ENCODE measurements at regions of chr15 and their contacts with region 1.

Region 1: DNA sequence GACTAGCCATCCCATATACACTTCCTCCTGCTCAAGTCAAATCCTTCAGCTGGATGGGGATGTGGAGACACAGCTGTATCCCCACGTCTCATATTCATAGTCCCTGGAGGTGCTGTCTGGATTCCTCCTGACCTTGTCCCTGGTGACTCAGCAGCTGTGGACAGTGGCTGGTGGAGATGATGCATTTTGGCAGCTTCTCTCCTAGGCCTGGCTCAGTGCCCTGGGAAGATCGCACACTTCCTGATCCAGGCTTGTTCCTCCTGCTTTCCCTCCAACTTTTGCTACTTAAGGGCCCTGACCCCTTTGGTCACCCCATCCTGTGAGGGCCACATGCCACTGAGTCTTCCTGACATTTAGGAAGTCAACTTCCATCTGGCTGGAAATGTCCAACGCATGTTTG is 44.4 kb downstream of the ADAMTSL3 start:
- DNase-seq: peak; percentile 78 to 83 (median 83)
- ATAC-seq: peak; percentile 55 to 84 (median 74)
- H3K4me3 ChIP-seq: no peak overlapping the region
- H3K27ac ChIP-seq: peak overlapping the region in 5 of 12 donors; percentile 22 to 56 (median 35)
- H3K4me1 ChIP-seq: peaks cover 0 to 46% (median 4%) of the 10 kb centered on the region in 12 donors
- H3K27me3 ChIP-seq: no peaks in the 10 kb centered on the region
- CTCF ChIP-seq: no peak
- POLR2A ChIP-seq: no peak

Region 2: DNA sequence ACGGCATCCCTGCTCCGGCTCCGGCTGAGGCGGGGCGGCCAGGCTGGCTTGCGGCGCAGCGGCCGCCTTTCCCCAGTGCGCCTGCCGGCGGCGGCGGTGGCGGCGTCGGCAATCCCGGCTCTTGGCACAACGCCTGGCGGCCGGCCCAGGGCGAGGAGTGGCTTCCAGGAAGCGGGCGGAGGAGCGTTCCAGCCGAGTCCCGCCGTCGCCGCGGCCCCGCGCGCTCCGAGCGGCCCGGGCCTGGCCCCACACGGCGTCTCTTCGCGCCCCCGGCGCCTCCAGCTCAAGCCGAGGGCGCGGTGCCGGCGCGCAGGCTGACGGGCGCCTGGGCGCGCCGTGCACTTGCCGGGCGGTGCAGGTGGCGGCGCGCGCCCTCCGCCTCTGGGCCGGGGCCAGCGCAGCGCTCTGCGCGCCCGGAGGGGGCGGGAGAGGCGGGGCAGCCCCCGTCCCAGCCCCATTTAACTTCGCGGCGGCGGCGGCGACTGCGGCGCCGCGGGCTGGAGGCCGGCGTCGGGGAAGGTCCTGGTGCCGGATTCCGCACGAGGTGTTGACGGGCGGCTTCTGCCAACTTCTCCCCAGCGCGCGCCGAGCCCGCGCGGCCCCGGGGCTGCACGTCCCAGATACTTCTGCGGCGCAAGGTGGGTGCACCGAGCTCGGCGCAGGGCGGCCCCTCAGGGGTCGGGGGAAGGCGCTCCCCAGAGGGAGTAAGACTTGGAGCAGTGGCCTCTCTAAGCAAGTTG is 44.5 kb before region 1 on chr15 and contains the start of gene ADAMTSL3:
- intact Hi-C with region 1: loop called in 3 of 10 experiments (anchors 2 to 5 kb)
- DNase-seq: peak; percentile 84 to 92 (median 88)
- ATAC-seq: peak; percentile 3 to 81 (median 57)
- H3K4me3 ChIP-seq: peak within 1 kb of the TSS; percentile 43 to 85 (median 68)
- H3K27ac ChIP-seq: peak within 1 kb of the TSS; percentile 14 to 90 (median 82)
- H3K4me1 ChIP-seq: peaks cover 0 to 45% (median 11%) of the 10 kb centered on the region in 12 donors
- H3K27me3 ChIP-seq: peaks cover 0 to 18% (median 0%) of the 10 kb centered on the region in 9 donors
- CTCF ChIP-seq: peak in 5 of 12 donors; percentile 6 to 31 (median 13)
- POLR2A ChIP-seq: peak in 1 of 2 donors; percentile 29
- total RNA-seq, gene ADAMTSL3: 6.6 to 13.2 (median 7.7) TPM

Region 3: DNA sequence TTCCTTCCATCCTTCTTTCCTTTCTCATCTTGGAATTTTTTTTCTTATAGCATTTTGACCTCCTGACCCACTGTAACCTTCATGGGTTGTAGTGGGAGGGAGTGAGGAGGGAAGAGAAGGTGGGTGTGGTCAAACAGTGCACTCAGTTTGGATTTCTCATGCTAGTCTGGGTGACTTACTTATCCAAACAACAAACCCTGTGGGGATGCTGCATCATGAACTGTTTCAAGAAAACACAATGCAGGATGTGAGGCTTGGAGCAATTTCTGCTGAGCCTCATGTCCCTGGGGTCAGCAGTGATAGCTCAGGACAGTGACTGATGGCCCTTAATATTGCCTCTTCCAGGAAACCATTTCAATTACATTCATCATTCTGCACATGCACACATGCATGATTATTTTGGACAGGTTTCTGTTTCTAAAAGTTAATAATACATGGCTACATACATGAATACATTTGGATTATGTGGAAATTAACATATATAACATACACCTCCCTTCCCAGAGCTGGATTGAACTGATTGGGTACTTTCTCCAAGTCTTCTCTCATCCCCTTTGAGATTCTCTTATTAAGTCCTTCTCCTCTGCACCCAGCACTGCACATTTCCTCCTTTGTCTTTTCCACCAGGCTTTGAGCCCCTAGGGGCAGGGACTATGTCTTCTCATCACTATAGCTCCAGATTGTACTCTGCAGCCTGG is 16.8 kb after region 1 on chr15:
- intact Hi-C with region 1: loop called in 1 of 10 experiments (anchors 2 kb)
- DNase-seq: peak in 2 of 5 donors; percentile 15 to 42
- ATAC-seq: peak in 3 of 4 donors; percentile 36 to 73 (median 69)
- H3K4me3 ChIP-seq: no peak overlapping the region
- H3K27ac ChIP-seq: no peak overlapping the region
- H3K4me1 ChIP-seq: peaks cover 0 to 30% (median 0%) of the 10 kb centered on the region in 12 donors
- H3K27me3 ChIP-seq: no peaks in the 10 kb centered on the region
- CTCF ChIP-seq: no peak
- POLR2A ChIP-seq: no peak

Measured in heart left ventricle (tissue), 16 donors.